ENCODE measurements at regions of chr14 and their contacts with region 1.

Region 1: GRCh38 chr14:49796025-49796424 is 28.1 kb downstream of the KLHDC2 start:
- DNase-seq: no peak
- H3K4me3 ChIP-seq: no peak overlapping the region
- H3K27ac ChIP-seq: no peak overlapping the region
- H3K4me1 ChIP-seq: peaks cover 0 to 4% (median 0%) of the 10 kb centered on the region in 6 donors
- H3K27me3 ChIP-seq: no peaks in the 10 kb centered on the region
- CTCF ChIP-seq: no peak
- POLR2A ChIP-seq: no peak

Region 2: GRCh38 chr14:49849213-49849847 is 53.3 kb after region 1 on chr14:
- intact Hi-C with region 1: loop called (anchors 10 kb)
- DNase-seq: no peak
- H3K4me3 ChIP-seq: no peak overlapping the region
- H3K27ac ChIP-seq: no peak overlapping the region
- H3K4me1 ChIP-seq: peaks cover 10 to 58% (median 46%) of the 10 kb centered on the region in 6 donors
- H3K27me3 ChIP-seq: no peaks in the 10 kb centered on the region
- CTCF ChIP-seq: no peak
- POLR2A ChIP-seq: no peak

Region 3: GRCh38 chr14:49908432-49908781 is 112.4 kb after region 1 on chr14:
- intact Hi-C with region 1: no loop called
- DNase-seq: no peak
- H3K4me3 ChIP-seq: no peak overlapping the region
- H3K27ac ChIP-seq: peak overlapping the region; percentile 48 to 85 (median 80)
- H3K4me1 ChIP-seq: peaks cover 3 to 51% (median 36%) of the 10 kb centered on the region in 6 donors
- H3K27me3 ChIP-seq: no peaks in the 10 kb centered on the region
- CTCF ChIP-seq: no peak
- POLR2A ChIP-seq: no peak

Region 4: GRCh38 chr14:50354527-50354926 is 558.5 kb after region 1 on chr14:
- intact Hi-C with region 1: no loop called
- DNase-seq: no peak
- H3K4me3 ChIP-seq: no peak overlapping the region
- H3K27ac ChIP-seq: no peak overlapping the region
- H3K4me1 ChIP-seq: peaks cover 0 to 7% (median 0%) of the 10 kb centered on the region in 6 donors
- H3K27me3 ChIP-seq: no peaks in the 10 kb centered on the region
- CTCF ChIP-seq: no peak
- POLR2A ChIP-seq: no peak